IMR-90 (cell line): ENCODE measurements at regions of chrX and their contacts with region 1.

Region 1: DNA sequence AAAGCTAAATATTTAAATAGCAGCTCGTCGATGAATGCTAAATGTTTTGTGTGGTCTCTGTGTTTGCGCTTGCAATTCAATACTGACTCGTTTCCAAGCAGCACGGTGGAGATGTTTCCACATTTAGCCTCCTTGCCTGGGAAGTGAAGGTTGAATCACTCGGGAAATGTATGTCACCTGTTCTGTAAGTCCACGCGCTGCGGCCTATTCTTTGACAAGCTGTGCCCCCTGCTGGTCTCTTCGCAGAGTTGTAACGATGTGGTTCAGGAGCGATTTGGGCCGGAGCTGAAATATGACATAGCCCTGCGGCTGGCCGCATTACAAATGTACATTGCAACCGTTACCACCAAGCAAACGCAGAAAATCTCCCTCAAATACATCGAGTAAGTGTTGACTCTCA is 89.6 kb upstream of the PRPS2 start:
- DNase-seq: peak; percentile 68
- ATAC-seq: peak; percentile 63
- H3K4me3 ChIP-seq: no peak overlapping the region
- H3K27ac ChIP-seq: no peak overlapping the region
- H3K4me1 ChIP-seq: no peaks in the 10 kb centered on the region
- H3K27me3 ChIP-seq: no peaks in the 10 kb centered on the region
- CTCF ChIP-seq: peak; percentile 57
- POLR2A ChIP-seq: no peak
- RAD21 ChIP-seq: peak; percentile 73

Region 2: GRCh38 chrX:11787564-11787963 is 914.1 kb before region 1 on chrX:
- CTCF ChIA-PET with region 1: no interaction called
- POLR2A ChIA-PET with region 1: no interaction called
- dilution Hi-C with region 1: no loop called
- in situ Hi-C with region 1: no loop called
- intact Hi-C with region 1: loop called (anchors 5 kb)
- DNase-seq: peak; percentile 33
- ATAC-seq: peak; percentile 73
- H3K4me3 ChIP-seq: 0 out of 2 replicates have a peak overlapping the region, but pooled peaks have one; percentile 5
- H3K27ac ChIP-seq: no peak overlapping the region
- H3K4me1 ChIP-seq: no peaks in the 10 kb centered on the region
- H3K27me3 ChIP-seq: no peaks in the 10 kb centered on the region
- CTCF ChIP-seq: peak; percentile 45
- POLR2A ChIP-seq: no peak
- RAD21 ChIP-seq: peak; percentile 28

Region 3: GRCh38 chrX:11944501-11944900 is 757.1 kb before region 1 on chrX:
- CTCF ChIA-PET with region 1: no interaction called
- POLR2A ChIA-PET with region 1: no interaction called
- dilution Hi-C with region 1: no loop called
- in situ Hi-C with region 1: no loop called
- intact Hi-C with region 1: loop called (anchors 10 kb)
- DNase-seq: peak; percentile 64
- ATAC-seq: peak; percentile 78
- H3K4me3 ChIP-seq: no peak overlapping the region
- H3K27ac ChIP-seq: no peak overlapping the region
- H3K4me1 ChIP-seq: no peaks in the 10 kb centered on the region
- H3K27me3 ChIP-seq: no peaks in the 10 kb centered on the region
- CTCF ChIP-seq: peak; percentile 54
- POLR2A ChIP-seq: no peak
- RAD21 ChIP-seq: peak; percentile 63

Region 4: GRCh38 chrX:12370497-12370986 is 331.1 kb before region 1 on chrX:
- CTCF ChIA-PET with region 1: no interaction called
- POLR2A ChIA-PET with region 1: no interaction called
- dilution Hi-C with region 1: no loop called
- in situ Hi-C with region 1: no loop called
- intact Hi-C with region 1: loop called (anchors 5 kb)
- DNase-seq: peak; percentile 94
- ATAC-seq: peak; percentile 77
- H3K4me3 ChIP-seq: no peak overlapping the region
- H3K27ac ChIP-seq: peak overlapping the region; percentile 87
- H3K4me1 ChIP-seq: peaks cover 5% of the 10 kb centered on the region
- H3K27me3 ChIP-seq: no peaks in the 10 kb centered on the region
- CTCF ChIP-seq: no peak
- POLR2A ChIP-seq: no peak
- RAD21 ChIP-seq: no peak